GM23248 (cell line): ENCODE measurements at regions of chr5 and their contacts with region 1.

Region 1: GRCh38 chr5:54944364-54944763 is 41.0 kb downstream of the ESM1 start:
- DNase-seq: peak; percentile 59
- H3K4me3 ChIP-seq: no peak overlapping the region
- H3K27ac ChIP-seq: no peak overlapping the region
- H3K4me1 ChIP-seq: no peaks in the 10 kb centered on the region
- H3K27me3 ChIP-seq: no peaks in the 10 kb centered on the region

Region 2: DNA sequence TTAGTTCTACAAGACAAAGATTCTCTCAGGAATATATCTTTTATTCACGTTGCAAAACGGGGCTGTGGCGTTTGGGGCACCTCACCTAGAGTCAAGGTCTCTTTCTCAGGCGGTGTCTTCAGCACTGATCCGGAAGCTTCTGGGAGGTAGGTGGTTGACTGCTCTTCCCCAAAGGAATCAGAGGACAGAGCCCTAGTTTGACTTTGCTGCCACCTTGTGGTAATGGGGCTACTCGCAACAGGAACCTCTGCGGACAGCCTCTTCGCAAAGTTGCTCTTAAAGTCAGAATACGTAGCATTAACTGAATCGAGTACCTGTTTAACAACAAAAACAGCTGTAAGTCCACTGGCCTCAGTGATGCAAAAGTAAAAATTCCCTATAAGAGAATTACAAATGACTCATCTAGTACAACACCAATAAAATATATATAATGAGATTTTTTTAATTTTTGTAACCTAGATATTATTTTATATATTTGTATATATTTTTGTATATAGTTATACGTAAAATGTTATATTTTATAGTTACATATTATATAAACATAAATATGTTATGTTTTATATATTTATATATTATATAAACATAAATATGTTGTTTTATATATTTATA is 202.3 kb after region 1 on chr5:
- in situ Hi-C with region 1: loop called (anchors 10 kb)
- DNase-seq: peak; percentile 85
- H3K4me3 ChIP-seq: no peak overlapping the region; the same call in 1 of the 2 replicates
- H3K27ac ChIP-seq: no peak overlapping the region
- H3K4me1 ChIP-seq: peaks cover 1% of the 10 kb centered on the region; the same call in 1 of the 2 replicates
- H3K27me3 ChIP-seq: no peaks in the 10 kb centered on the region